ENCODE measurements at regions of chr2 and their contacts with region 1.

Region 1: DNA sequence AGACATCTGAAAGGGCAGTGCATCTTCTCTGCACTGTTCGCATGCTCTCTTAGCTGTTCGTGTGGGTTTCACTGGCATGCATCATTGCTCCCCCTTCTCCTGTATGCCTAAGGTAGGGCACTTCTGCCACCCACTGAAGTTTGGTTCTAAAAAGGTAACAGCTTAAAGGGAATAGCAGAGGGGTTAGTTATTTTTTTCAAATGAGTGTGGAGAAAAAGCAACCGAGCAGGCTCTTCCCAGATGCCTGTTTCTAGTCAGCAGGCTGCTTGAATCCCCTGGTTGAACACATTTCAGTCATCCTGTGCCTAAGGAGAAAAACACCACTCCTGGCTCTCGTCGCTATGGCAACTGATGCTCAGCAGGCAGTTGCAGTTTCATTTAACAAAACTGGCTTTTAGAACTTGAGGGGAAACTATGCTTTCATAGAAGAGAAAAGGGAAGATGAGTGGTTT is 69.8 kb upstream of the GALNT3 start:
- DNase-seq: no peak
- ATAC-seq: no peak
- H3K4me3 ChIP-seq: no peak overlapping the region
- H3K27ac ChIP-seq: no peak overlapping the region
- H3K4me1 ChIP-seq: no peaks in the 10 kb centered on the region
- H3K27me3 ChIP-seq: no peaks in the 10 kb centered on the region
- CTCF ChIP-seq: no peak

Region 2: DNA sequence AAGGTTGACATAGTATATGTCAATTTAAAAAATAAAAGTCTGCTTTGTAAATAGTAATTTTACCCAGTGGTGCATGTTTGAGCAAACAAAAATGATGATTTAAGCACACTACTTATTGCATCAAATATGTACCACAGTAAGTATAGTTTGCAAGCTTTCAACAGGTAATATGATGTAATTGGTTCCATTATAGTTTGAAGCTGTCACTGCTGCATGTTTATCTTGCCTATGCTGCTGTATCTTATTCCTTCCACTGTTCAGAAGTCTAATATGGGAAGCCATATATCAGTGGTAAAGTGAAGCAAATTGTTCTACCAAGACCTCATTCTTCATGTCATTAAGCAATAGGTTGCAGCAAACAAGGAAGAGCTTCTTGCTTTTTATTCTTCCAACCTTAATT is 473.0 kb before region 1 on chr2:
- intact Hi-C with region 1: loop called in 1 of 3 experiments (anchors 10 kb)
- DNase-seq: no peak
- ATAC-seq: peak in 1 of 4 donors; percentile 54
- H3K4me3 ChIP-seq: no peak overlapping the region
- H3K27ac ChIP-seq: no peak overlapping the region
- H3K4me1 ChIP-seq: peaks cover 0 to 6% (median 0%) of the 10 kb centered on the region in 3 donors
- H3K27me3 ChIP-seq: no peaks in the 10 kb centered on the region
- CTCF ChIP-seq: no peak

Region 3: GRCh38 chr2:165634855-165635254 is 229.0 kb before region 1 on chr2:
- intact Hi-C with region 1: no loop called
- DNase-seq: no peak
- ATAC-seq: peak in 3 of 4 donors; percentile 47 to 79 (median 78)
- H3K4me3 ChIP-seq: no peak overlapping the region
- H3K27ac ChIP-seq: no peak overlapping the region
- H3K4me1 ChIP-seq: no peaks in the 10 kb centered on the region
- H3K27me3 ChIP-seq: no peaks in the 10 kb centered on the region
- CTCF ChIP-seq: no peak

Measured in pancreas (tissue), 10 donors.